Activated T-helper 1 cell treated with anti-CD3 and anti-CD28 coated beads, Interleukin-12 subunit alpha, Interleukin-12 subunit beta, Interleukin-2, Interleukin-4 antibody, amounts not matched to agents 30 ng/mL and 10 ng/mL and 1 ng/mL, durations not matched to agents 14 hours and 24 hours and 36 hours (primary cell): ENCODE measurements at regions of chr20 and their contacts with region 1.

Region 1: GRCh38 chr20:49699200-49699992 is 14.3 kb downstream of the B4GALT5 start:
- DNase-seq: no peak
- H3K4me3 Mint-ChIP-seq: no peak overlapping the region
- H3K27ac Mint-ChIP-seq: no peak overlapping the region
- H3K4me1 Mint-ChIP-seq: peaks cover 62% of the 10 kb centered on the region
- H3K27me3 Mint-ChIP-seq: no peaks in the 10 kb centered on the region

Region 2: DNA sequence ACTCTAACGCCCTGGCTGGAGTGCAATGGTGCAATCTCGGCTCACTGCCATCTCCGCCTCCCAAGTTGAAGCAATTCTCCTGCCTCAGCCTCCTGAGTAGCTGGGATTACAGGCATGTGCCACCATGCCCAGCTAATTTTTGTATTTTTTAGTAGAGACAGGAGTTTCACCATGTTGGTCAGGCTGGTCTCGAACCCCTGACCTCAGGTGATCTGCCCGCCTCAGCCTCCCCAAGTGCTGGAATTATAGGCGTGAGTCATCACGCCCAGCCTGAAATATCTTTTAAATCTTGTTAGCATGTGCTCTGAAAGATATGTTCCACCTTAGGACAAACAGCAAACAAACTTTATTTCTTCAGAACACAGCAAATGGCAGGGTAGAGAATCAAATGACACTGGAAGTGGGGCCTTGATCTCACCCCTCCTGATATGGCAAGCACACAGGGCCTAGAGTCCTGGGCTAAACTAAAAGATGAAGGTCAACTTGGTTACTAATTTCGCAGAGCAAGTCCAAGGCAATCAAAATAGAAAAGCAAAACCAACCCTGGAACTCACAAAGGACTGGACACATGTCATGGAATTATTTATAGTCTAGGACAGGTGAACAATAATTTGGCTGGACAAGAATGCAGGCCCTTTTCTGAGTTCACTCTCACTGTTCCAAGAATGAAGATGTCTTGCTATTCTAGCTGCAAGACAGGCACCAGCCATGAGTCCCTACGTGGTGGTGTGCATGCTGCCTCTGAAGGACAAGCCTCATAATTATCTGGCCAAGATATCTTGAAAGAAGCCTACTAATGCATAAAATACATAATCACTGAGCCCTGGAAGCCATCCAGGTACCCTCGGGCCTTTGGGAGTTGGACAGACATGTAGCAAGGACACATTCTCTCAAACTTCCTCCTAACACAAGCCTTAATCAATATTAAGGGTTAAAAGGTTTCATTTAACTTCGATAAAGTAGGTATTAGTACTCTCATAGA is 21.3 kb before region 1 on chr20:
- intact Hi-C with region 1: loop called (anchors 2 kb)
- DNase-seq: no peak
- H3K4me3 Mint-ChIP-seq: peak overlapping the region; percentile 15
- H3K27ac Mint-ChIP-seq: peak overlapping the region; percentile 76
- H3K4me1 Mint-ChIP-seq: peaks cover 85% of the 10 kb centered on the region
- H3K27me3 Mint-ChIP-seq: no peaks in the 10 kb centered on the region

Region 3: GRCh38 chr20:49713753-49714712 is 14.6 kb after region 1 on chr20 and contains the start of gene B4GALT5:
- intact Hi-C with region 1: loop called (anchors 1 kb)
- DNase-seq: peak; percentile 60
- H3K4me3 Mint-ChIP-seq: peak within 1 kb of the TSS; percentile 92
- H3K27ac Mint-ChIP-seq: peak within 1 kb of the TSS; percentile 94
- H3K4me1 Mint-ChIP-seq: peaks cover 49% of the 10 kb centered on the region
- H3K27me3 Mint-ChIP-seq: peaks cover 5% of the 10 kb centered on the region
- total RNA-seq, gene B4GALT5: 38.9 and 39.3 TPM in 2 replicates

Region 4: DNA sequence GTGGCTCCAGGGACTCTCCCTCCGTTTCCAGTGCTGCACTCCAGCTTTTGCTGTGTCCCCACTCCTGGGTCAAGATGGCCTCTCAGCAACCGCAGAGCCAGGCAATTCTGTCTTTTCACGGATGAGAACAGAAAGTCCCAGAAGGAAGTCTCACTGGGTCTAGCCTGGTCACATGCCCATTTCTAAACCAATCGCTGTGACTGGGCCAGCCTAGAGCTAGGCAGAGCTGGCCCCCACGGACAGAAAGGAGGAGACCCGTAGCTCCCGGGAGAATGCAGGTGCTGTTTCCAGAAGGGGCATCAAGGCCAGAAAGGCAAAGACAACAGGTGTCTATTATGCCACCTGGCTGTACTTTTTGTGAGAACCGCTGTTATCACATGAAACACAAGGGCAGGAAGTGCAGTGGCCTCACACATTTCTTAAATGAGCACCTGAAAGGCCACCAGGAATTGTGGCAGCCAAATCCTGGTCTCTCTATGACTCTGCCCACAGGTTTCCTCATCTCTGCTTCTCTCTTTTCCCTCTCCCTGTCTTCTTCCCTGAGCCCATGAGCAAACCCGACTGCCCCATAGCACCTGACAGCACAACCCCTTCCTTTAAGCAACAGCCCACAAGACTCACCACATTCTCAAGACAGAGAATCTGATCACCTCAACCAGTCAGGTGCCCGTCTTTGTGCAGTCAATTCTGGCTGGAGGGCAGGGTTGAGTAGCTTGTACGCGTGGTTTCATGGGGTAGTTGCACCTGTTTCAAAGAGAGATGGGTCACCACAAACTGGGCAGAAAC is 51.4 kb after region 1 on chr20:
- intact Hi-C with region 1: loop called (anchors 5 kb)
- DNase-seq: no peak
- H3K4me3 Mint-ChIP-seq: no peak overlapping the region
- H3K27ac Mint-ChIP-seq: no peak overlapping the region
- H3K4me1 Mint-ChIP-seq: peaks cover 10% of the 10 kb centered on the region
- H3K27me3 Mint-ChIP-seq: peaks cover 36% of the 10 kb centered on the region